A549 (cell line): ENCODE measurements at regions of chr1 and their contacts with region 1.

Region 1: GRCh38 chr1:12619792-12620487 is 1.9 kb upstream of the DHRS3 start:
- DNase-seq: peak; percentile 70 to 86
- ATAC-seq: peak; percentile 62 to 63
- H3K4me3 ChIP-seq: peak overlapping the region; percentile 93
- H3K27ac ChIP-seq: peak overlapping the region; percentile 99 to 100
- H3K4me1 ChIP-seq: peaks cover 22% of the 10 kb centered on the region
- CTCF ChIP-seq: peak; percentile 78
- EP300 ChIP-seq: no peak
- POLR2A ChIP-seq: no peak; the same call in 1 of the 2 replicates
- RAD21 ChIP-seq: peak; percentile 91 to 94

Region 2: GRCh38 chr1:12314333-12314903 is 305.5 kb before region 1 on chr1:
- CTCF ChIA-PET with region 1: interaction called, 60 read pairs
- POLR2A ChIA-PET with region 1: interaction called, 5 read pairs
- DNase-seq: peak; percentile 10 to 40
- ATAC-seq: peak in 1 of 2 experiments; percentile 79; a peak in 3 of 6 replicates
- H3K4me3 ChIP-seq: no peak overlapping the region
- H3K27ac ChIP-seq: peak overlapping the region; percentile 45 to 77; a peak in 5 of 6 replicates
- H3K4me1 ChIP-seq: peaks cover 10% of the 10 kb centered on the region; the same call in 2 of the 3 replicates
- CTCF ChIP-seq: peak; percentile 68
- EP300 ChIP-seq: no peak
- POLR2A ChIP-seq: no peak
- RAD21 ChIP-seq: peak; percentile 76 to 87

Region 3: GRCh38 chr1:12454406-12455391 is 165.2 kb before region 1 on chr1:
- CTCF ChIA-PET with region 1: no interaction called
- POLR2A ChIA-PET with region 1: interaction called, 10 read pairs
- DNase-seq: peak in 1 of 2 experiments; percentile 24
- ATAC-seq: peak in 1 of 2 experiments; percentile 71; a peak in 3 of 6 replicates
- H3K4me3 ChIP-seq: no peak overlapping the region
- H3K27ac ChIP-seq: peak overlapping the region; percentile 60 to 81
- H3K4me1 ChIP-seq: peaks cover 51% of the 10 kb centered on the region
- CTCF ChIP-seq: no peak
- EP300 ChIP-seq: no peak
- POLR2A ChIP-seq: no peak
- RAD21 ChIP-seq: no peak

Region 4: DNA sequence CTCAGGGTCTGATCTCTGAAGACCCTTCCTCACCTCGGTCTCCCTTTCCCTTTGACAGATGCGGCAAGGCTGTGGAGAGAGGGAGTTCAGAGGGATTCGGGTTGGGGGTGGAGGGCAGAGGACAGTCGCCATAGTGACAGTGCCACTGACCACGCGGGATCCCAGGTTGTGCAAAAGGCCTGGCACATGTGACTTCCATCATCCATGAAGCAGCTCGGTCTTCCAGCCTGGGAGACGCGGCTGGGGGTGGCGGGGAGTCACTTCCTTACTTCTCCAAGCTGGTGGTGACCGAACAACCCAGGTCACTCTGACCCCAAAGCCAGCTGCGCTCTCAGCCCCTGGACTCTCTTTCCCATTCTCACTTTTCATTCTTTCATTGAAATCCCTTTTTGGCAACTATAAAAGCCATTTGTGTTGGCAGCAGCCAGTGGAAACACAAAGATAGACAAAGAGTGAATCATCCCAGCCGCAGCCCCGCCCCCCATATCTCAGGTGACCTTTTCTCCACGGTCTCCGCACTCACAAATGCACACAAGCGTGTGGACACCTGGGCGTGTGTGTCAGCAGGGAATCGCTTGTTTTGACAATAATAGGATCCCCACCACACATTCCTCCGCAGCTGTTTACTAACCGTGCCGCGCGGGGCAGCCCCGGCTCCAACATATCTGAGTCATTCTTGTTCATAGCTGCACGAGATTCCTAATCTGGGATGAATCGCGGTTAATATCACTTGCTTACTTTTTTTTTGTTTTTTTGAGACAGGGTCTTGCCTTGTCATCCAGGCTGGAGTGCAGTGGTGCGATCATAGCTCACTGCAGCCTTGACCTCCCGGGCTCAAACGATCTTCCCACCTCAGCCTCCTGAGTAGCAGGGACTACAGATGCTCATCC is 70.2 kb before region 1 on chr1:
- CTCF ChIA-PET with region 1: interaction called, 4 read pairs
- POLR2A ChIA-PET with region 1: interaction called, 15 read pairs
- DNase-seq: peak; percentile 80 to 92
- ATAC-seq: peak; percentile 79 to 83
- H3K4me3 ChIP-seq: peak overlapping the region; percentile 26; the same call in 2 of the 3 replicates
- H3K27ac ChIP-seq: peak overlapping the region; percentile 81 to 98
- H3K4me1 ChIP-seq: peaks cover 38% of the 10 kb centered on the region
- CTCF ChIP-seq: no peak
- EP300 ChIP-seq: peak; percentile 52 to 70; a peak in 3 of 5 replicates
- POLR2A ChIP-seq: no peak
- RAD21 ChIP-seq: peak in 1 of 2 experiments; percentile 36; a peak in 3 of 5 replicates

Region 5: DNA sequence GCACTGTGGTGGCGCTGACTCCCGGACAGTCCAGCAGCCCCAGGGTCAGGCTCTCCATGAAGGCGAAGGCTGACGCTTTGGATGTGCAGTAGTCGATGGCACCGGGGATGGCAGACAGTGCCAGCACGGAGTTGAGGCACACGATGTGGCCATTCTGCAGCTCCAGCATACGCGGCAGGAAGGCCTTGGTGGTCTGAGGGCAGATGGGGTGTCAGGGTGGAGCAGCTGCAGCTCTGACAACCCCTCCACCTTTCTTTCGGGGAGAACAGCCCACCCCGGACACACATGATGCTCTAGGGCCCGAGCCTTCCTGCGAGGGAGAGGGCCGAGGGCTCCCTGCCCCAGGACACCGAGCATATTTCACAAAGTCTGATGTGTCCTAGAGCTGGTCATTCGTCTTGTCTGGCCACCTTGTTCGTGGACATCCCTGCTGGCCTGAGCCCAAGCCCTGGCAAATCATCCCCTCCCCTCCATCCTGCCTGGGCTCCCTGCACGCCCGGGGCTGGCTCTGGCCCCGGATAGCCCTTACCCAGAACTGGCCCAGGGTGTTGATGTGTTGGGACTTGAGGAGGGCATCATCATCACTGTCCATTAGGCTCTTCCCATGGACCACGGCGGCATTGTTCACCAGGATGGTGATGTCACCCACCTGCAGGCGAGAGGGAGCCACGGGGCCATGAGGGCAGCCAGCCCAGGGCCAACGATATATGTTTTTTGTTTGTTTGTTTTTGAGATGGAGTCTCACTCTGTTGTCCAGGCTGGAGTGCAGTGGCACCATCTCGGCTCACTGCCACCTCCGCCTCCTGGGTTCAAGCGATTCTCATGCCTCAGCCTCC is 41.0 kb before region 1 on chr1:
- CTCF ChIA-PET with region 1: interaction called, 8 read pairs
- POLR2A ChIA-PET with region 1: interaction called, 30 read pairs
- DNase-seq: no peak
- ATAC-seq: peak in 1 of 2 experiments; percentile 26; a peak in 3 of 6 replicates
- H3K4me3 ChIP-seq: no peak overlapping the region
- H3K27ac ChIP-seq: peak overlapping the region in 1 of 2 experiments; percentile 58; a peak in 3 of 6 replicates
- H3K4me1 ChIP-seq: peaks cover 37% of the 10 kb centered on the region
- CTCF ChIP-seq: no peak
- EP300 ChIP-seq: no peak
- POLR2A ChIP-seq: no peak
- RAD21 ChIP-seq: no peak

Region 6: DNA sequence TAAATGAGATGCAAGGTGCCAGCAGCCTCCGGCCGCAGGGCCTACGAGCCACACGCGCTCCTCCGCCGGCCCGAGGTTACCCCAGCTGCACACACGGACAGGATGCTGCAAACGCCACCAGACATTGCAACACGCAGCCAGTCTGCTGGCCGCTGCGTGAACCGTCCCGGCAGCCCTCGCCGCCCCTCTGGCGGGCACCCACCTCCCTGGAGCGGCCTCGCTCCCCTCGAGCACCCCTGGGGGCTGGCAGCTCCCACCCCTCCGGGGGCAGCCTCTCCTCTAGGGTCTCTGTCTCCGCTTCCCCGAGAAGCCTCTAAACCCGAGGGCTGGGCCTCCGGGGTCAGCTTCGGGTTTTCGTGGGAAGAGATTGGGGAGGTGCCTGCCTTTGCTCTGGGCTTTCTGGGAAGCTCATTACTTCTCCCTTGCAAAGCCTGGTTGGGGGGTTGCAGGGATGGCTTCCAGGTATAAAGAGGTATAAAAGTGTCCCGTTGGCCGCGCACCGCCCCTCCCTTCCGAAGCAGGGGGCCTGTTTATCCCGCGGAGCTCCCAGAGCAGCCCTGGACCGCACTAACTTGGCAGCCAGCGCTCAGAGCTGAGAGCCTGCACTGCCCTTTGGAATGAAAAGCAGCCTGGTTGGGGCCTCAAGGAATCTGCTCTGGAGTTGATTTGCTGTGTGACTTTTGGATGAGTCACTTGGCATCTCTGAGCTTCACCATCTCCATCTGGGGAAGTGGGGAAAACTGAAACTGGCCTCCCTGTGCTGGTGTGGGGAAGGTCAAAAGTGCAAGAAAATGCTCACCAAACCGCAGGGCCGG is 23.7 kb before region 1 on chr1:
- CTCF ChIA-PET with region 1: interaction called, 17 read pairs
- POLR2A ChIA-PET with region 1: interaction called, 209 read pairs
- DNase-seq: peak; percentile 92 to 98
- ATAC-seq: peak; percentile 81
- H3K4me3 ChIP-seq: peak overlapping the region; percentile 33; the same call in 2 of the 3 replicates
- H3K27ac ChIP-seq: peak overlapping the region; percentile 97 to 100
- H3K4me1 ChIP-seq: peaks cover 87% of the 10 kb centered on the region
- CTCF ChIP-seq: no peak
- EP300 ChIP-seq: peak; percentile 95 to 97; a peak in 3 of 5 replicates
- POLR2A ChIP-seq: peak; percentile 45
- RAD21 ChIP-seq: no peak; a peak in 3 of 5 replicates

Region 7: DNA sequence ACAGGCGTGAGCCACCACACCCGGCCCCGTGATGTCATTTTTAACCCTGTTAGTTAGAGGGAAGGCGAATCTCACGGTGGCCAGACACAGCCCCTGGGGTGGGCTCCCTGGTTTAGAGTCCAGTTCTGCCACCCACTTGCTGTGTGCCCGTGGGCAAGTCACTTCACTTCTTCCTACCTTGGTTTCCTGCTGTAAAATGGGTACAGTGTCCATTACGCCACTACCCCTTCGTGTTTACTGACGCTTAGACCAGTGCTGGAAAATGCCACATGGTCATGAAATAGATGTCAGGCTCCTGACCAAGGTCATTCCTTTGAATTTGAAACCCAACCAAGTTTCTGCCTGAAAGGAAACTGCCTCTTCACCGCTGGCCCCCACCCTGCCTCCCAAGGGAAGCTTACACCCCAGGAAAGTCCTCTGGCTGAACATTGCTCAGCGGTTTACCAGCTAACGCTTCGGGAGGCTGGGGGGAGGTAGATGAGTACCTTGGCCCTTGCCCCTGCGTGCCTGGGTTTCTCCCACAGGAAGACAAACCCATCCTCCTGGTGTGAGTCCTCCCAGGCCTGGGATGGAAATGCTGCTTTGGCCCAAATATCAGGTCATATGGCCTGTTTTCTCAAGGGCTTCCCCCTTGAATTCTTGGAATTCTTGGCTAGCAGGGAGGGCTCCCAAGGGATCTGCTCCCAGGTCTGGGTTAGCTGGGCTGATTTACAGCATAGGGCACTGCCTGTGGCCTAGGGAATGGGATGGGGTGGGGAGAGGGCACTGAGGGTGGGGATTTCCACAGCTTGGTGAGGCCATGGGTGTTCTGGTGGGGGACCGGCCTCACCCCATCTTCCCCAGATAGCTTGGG is 16.4 kb after region 1 on chr1:
- CTCF ChIA-PET with region 1: no interaction called
- POLR2A ChIA-PET with region 1: no interaction called
- DNase-seq: no peak
- ATAC-seq: peak; percentile 59 to 90
- H3K4me3 ChIP-seq: no peak overlapping the region
- H3K27ac ChIP-seq: peak overlapping the region in 1 of 2 experiments; percentile 39; a peak in 3 of 6 replicates
- H3K4me1 ChIP-seq: peaks cover 5% of the 10 kb centered on the region; the same call in 1 of the 3 replicates
- CTCF ChIP-seq: no peak
- EP300 ChIP-seq: no peak
- POLR2A ChIP-seq: no peak
- RAD21 ChIP-seq: no peak

Region 8: GRCh38 chr1:12658531-12659453 is 38.9 kb after region 1 on chr1:
- CTCF ChIA-PET with region 1: interaction called, 21 read pairs
- POLR2A ChIA-PET with region 1: interaction called, 8 read pairs
- DNase-seq: peak; percentile 81 to 93
- ATAC-seq: peak; percentile 91 to 96
- H3K4me3 ChIP-seq: no peak overlapping the region
- H3K27ac ChIP-seq: peak overlapping the region in 1 of 2 experiments; percentile 61; a peak in 3 of 6 replicates
- H3K4me1 ChIP-seq: 0 out of 3 replicates have a peak, but pooled peaks cover 4% of the 10 kb centered on the region
- CTCF ChIP-seq: peak; percentile 78
- EP300 ChIP-seq: no peak
- POLR2A ChIP-seq: no peak
- RAD21 ChIP-seq: peak; percentile 86 to 91